A549 (cell line): ENCODE measurements at regions of chr1 and their contacts with region 1.

Region 1: DNA sequence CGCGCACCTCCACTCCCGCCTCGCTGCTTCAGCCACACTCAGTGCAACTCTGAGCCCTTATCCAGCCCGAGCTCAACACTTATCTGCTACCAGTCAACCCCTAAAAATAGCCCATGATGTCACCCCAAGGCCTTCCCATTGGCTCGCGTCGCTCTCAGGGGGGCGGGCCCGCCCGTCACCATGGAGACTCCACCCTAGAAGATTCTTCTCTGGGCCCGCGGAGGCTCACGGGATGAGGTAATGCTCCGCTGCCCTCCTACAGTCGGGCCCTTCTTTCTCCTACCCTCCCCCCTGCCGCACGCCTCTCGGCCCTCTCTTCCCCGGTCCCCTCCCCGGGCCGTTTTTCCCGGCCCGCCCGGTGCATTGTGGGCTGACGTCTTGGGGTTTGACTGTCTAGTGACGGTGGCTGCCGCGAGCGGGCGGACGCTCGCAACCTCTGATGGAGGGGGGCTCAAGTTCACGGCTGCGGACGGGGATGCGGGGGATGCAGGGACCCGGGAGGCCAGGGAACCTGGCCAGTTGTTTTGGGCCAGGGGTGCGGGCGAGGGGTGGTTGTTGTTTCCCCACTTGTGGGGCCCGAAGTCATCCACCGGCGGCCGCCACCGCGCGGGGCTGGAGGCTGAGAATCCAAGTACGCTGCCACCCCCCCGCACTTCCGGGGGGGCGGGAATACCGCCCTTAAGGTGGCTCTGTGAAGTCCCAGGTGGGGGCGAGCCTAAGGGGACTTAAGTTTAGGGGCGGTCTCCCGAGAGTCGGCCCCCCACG is at the start of gene JUN:
- DNase-seq: peak; percentile 92 to 98
- ATAC-seq: peak; percentile 75 to 82
- H3K4me3 ChIP-seq: peak within 1 kb of the TSS; percentile 95
- H3K27ac ChIP-seq: peak within 1 kb of the TSS; percentile 91 to 98
- H3K4me1 ChIP-seq: peaks cover 22% of the 10 kb centered on the region
- CTCF ChIP-seq: no peak
- EP300 ChIP-seq: no peak
- POLR2A ChIP-seq: peak; percentile 100
- RAD21 ChIP-seq: 0 out of 5 replicates have a peak, but pooled peaks of 1 of the 2 experiments have one; percentile 13
- polyA plus RNA-seq, gene JUN: 32.6 and 59.8 TPM in 2 replicates

Region 2: DNA sequence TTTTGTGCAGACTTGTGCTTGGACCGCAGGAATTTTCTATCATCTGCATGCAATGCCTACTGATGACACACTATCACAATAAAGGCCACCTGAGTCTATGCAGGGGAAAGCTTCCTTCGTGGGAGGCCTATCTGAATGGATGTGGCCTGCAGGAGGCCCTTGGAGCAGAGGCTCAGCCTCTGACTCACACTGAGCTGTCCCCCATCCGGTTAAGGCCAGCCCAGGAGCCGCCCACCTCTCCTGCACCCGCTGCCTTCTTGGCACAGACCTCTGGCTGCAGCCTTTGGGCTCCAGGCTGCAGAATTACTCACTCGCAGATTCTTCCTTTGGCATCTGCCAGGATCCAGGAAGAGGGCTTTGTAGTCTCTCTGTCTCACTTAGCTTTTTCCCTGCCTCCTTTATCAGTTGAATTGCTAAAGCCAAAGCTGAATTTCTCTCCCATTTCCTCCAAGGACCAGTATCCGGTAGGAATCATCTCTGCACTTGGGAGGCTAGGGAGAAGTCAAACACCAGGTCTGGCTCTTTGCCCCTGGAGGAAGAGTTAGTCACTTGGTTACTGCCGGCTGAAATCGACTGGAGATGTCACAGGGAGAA is 64.7 kb after region 1 on chr1:
- CTCF ChIA-PET with region 1: interaction called, 5 read pairs
- POLR2A ChIA-PET with region 1: interaction called, 24 read pairs
- DNase-seq: peak; percentile 72 to 94
- ATAC-seq: peak; percentile 99
- H3K4me3 ChIP-seq: no peak overlapping the region
- H3K27ac ChIP-seq: peak overlapping the region; percentile 89 to 95
- H3K4me1 ChIP-seq: peaks cover 47% of the 10 kb centered on the region
- CTCF ChIP-seq: no peak
- EP300 ChIP-seq: peak; percentile 90 to 94; a peak in 4 of 5 replicates
- POLR2A ChIP-seq: no peak
- RAD21 ChIP-seq: peak; percentile 25 to 69; a peak in 4 of 5 replicates

Region 3: GRCh38 chr1:59150577-59151391 is 366.6 kb after region 1 on chr1:
- CTCF ChIA-PET with region 1: no interaction called
- POLR2A ChIA-PET with region 1: interaction called, 13 read pairs
- DNase-seq: peak; percentile 78 to 89
- ATAC-seq: peak; percentile 86 to 87
- H3K4me3 ChIP-seq: peak overlapping the region; percentile 35; the same call in 2 of the 3 replicates
- H3K27ac ChIP-seq: peak overlapping the region; percentile 93 to 97
- H3K4me1 ChIP-seq: peaks cover 57% of the 10 kb centered on the region
- CTCF ChIP-seq: no peak
- EP300 ChIP-seq: peak; percentile 38 to 67; a peak in 2 of 5 replicates
- POLR2A ChIP-seq: no peak
- RAD21 ChIP-seq: peak; percentile 30 to 51; a peak in 3 of 5 replicates

Region 4: DNA sequence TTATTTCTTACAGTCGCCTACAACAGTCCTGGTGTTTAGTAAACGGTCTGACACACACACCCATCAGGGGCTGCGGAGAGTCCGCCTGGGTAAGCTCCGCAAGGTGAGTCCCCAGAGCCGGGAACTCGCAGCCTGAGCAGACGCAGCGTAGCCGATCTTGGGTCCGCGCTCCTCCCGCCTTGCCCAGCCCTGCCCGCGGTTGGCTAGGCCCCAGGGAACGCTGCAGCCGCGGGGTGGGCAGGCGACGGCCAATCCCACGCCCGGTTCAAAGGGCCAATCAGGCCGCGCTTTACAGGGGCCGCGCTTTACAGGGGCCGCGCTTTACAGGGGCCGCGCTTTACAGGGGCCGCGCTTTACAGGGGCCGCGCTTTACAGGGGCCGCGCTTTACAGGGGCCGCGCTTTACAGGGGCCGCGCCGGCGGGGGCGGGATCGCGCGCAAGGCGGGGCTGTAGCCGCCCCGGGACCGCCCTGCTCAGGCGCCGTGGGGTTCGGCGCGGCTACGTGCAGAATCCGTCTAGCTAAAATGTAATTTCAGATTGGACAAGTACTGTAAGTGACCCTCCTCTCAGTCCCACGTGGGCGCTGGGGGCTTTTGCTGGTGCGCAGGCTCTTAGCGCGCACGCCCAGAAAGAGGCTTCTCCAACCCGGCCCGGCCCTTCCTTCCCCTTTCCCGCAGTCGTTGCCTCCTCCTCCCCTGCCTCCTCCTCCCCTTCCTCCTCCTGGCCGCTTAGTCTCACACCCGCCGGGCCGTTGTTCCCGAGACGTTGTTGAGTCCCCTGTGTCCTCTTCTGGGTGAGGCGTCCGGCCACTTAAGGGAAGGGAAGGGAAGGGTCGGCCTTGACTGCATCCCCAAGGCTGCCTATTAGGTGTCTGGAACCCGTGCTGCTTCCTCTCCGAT is 512.4 kb after region 1 on chr1 and contains the start of gene FGGY:
- CTCF ChIA-PET with region 1: no interaction called
- POLR2A ChIA-PET with region 1: interaction called, 14 read pairs
- DNase-seq: peak; percentile 92 to 96
- ATAC-seq: peak; percentile 96 to 97
- H3K4me3 ChIP-seq: peak within 1 kb of the TSS; percentile 72
- H3K27ac ChIP-seq: peak within 1 kb of the TSS; percentile 97 to 98
- H3K4me1 ChIP-seq: peaks cover 27% of the 10 kb centered on the region
- CTCF ChIP-seq: no peak
- EP300 ChIP-seq: no peak
- POLR2A ChIP-seq: peak; percentile 78
- RAD21 ChIP-seq: no peak; a peak in 1 of 5 replicates
- polyA plus RNA-seq, gene FGGY: 4.8 and 5.1 TPM in 2 replicates